ENCODE measurements at regions of chr7 and their contacts with region 1.

Region 1: GRCh38 chr7:55787796-55788195 is 74.8 kb downstream of the SEPTIN14 start:
- DNase-seq: no peak
- ATAC-seq: no peak
- H3K4me3 ChIP-seq: no peak overlapping the region
- H3K27ac ChIP-seq: no peak overlapping the region
- H3K4me1 ChIP-seq: no peaks in the 10 kb centered on the region
- H3K27me3 ChIP-seq: peaks cover 0 to 11% of the 10 kb centered on the region in 2 experiments; a peak in 2 of 5 replicates
- CTCF ChIP-seq: no peak
- EP300 ChIP-seq: no peak
- POLR2A ChIP-seq: no peak
- RAD21 ChIP-seq: no peak

Region 2: DNA sequence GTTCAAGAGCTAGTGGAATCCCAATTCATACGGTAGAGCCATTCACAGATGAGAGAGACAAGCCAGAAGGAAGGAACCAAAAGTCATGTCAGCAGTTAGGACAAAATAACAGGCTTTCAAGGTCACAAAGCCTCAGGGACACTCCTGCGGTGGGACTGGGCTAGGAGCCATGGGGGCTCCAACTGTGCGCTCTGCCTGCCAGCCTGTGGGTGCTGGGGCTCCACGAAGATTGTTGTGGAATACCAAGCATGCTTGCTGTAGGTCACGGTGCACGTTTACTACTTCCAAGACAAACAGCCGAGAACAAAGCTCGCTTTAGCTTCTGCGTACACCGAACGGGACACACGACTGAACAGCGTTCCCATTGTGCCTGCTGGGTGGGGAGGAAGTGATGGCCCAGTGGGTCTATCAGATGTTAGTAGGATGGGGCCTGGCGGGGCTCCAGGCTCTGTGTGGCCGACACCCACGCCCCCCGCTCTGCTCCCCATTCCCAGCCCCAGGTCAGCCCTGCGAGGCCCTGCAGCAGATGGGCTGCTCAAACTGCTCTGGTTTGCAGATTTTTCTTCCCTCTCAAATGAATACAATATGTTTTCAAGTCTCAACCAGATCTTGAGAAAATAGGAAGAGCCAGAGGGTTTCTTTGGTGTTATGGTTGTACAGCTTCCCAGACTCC is 610.1 kb before region 1 on chr7:
- CTCF ChIA-PET with region 1: no interaction called
- POLR2A ChIA-PET with region 1: no interaction called
- in situ Hi-C with region 1: no loop called
- intact Hi-C with region 1: loop called (anchors 5 kb)
- DNase-seq: no peak
- ATAC-seq: no peak
- H3K4me3 ChIP-seq: no peak overlapping the region
- H3K27ac ChIP-seq: no peak overlapping the region
- H3K4me1 ChIP-seq: no peaks in the 10 kb centered on the region
- H3K27me3 ChIP-seq: peaks cover 12 to 64% of the 10 kb centered on the region in 2 experiments
- CTCF ChIP-seq: no peak
- EP300 ChIP-seq: no peak
- POLR2A ChIP-seq: no peak
- RAD21 ChIP-seq: no peak

Measured in K562 (cell line).